ENCODE measurements at regions of chr11 and their contacts with region 1.

Region 1: DNA sequence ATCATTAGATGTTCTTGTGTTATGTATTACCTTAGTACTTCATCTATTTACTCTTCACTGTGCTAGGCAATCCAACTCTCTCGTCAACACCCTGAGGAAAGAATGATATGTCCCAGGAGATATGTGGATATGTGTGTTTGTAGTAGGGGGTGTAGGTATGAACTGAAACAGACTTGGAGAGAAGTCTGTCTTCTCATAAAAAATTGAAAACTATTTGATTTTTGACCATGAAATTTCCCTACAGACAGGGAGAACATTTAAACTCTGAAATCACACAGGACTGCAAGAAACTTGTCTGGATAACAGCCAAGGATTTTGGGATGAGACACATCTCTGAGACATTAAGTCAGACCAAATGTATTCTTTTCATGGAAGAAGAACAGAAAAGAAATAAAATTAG is 967.0 kb upstream of the FAT3 start:
- DNase-seq: no peak
- ATAC-seq: no peak
- H3K4me3 ChIP-seq: no peak overlapping the region
- H3K4me3 Mint-ChIP-seq: no peak overlapping the region
- H3K27ac ChIP-seq: no peak overlapping the region
- H3K27ac Mint-ChIP-seq: no peak overlapping the region
- H3K4me1 ChIP-seq: no peaks in the 10 kb centered on the region
- H3K4me1 Mint-ChIP-seq: no peaks in the 10 kb centered on the region
- H3K27me3 ChIP-seq: no peaks in the 10 kb centered on the region
- H3K27me3 Mint-ChIP-seq: no peaks in the 10 kb centered on the region
- CTCF ChIP-seq: no peak

Region 2: GRCh38 chr11:91199866-91200265 is 57.8 kb before region 1 on chr11:
- intact Hi-C with region 1: loop called (anchors 10 kb)
- DNase-seq: no peak
- ATAC-seq: no peak
- H3K4me3 ChIP-seq: no peak overlapping the region
- H3K4me3 Mint-ChIP-seq: no peak overlapping the region
- H3K27ac ChIP-seq: no peak overlapping the region
- H3K27ac Mint-ChIP-seq: no peak overlapping the region
- H3K4me1 ChIP-seq: no peaks in the 10 kb centered on the region
- H3K4me1 Mint-ChIP-seq: no peaks in the 10 kb centered on the region
- H3K27me3 ChIP-seq: no peaks in the 10 kb centered on the region
- H3K27me3 Mint-ChIP-seq: no peaks in the 10 kb centered on the region
- CTCF ChIP-seq: no peak

Region 3: DNA sequence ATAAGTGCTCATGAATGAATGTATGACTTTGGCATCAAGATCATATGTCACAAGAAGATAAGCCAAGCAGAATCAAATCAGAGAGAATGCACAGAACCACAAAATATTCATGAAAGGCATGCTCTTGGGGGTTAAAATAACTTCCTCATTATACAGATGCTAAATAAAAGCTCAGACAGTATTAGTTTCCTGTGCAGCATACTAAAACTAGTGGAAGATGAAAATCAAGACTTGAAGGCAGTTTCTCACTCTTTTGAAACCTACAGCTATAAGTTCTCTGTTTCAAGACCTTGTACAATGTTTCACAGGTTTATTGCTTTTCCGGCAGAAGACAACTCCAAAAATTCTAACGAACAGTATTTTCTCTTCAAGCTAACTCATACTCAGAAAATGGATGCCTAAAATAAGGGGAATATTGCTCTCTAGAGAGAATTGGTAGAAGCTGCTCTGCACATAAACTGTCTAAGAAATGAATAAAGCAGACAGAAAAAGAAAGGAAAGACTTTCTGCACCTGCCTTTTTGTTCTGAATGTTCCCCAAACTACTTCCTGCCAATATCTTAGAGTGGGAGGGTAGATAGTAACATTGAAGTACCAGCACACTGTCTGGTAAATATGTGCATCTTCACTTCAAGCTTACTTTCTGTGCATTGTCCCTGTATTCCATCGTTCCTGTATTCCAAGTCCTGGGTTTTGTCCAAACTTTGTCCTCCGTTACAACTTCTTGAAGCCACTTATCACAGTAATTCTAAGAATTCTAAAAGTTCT is 327.6 kb after region 1 on chr11:
- intact Hi-C with region 1: no loop called
- DNase-seq: no peak
- ATAC-seq: no peak
- H3K4me3 ChIP-seq: no peak overlapping the region
- H3K4me3 Mint-ChIP-seq: no peak overlapping the region
- H3K27ac ChIP-seq: no peak overlapping the region
- H3K27ac Mint-ChIP-seq: no peak overlapping the region
- H3K4me1 ChIP-seq: no peaks in the 10 kb centered on the region
- H3K4me1 Mint-ChIP-seq: no peaks in the 10 kb centered on the region
- H3K27me3 ChIP-seq: no peaks in the 10 kb centered on the region
- H3K27me3 Mint-ChIP-seq: no peaks in the 10 kb centered on the region
- CTCF ChIP-seq: no peak

Measured in natural killer cell (primary cell).